Left lung (tissue), 14 donors: ENCODE measurements at regions of chr9 and their contacts with region 1.

Region 1: GRCh38 chr9:129177791-129178559 is at the start of gene IER5L:
- DNase-seq: peak; percentile 94 to 97 (median 96)
- ATAC-seq: peak; percentile 73
- H3K4me3 ChIP-seq: peak within 1 kb of the TSS; percentile 87 to 93
- H3K27ac ChIP-seq: peak within 1 kb of the TSS; percentile 93 to 100
- H3K4me1 ChIP-seq: peaks cover 6 to 40% of the 10 kb centered on the region in 2 donors
- H3K27me3 ChIP-seq: peaks cover 0 to 19% of the 10 kb centered on the region in 2 donors
- CTCF ChIP-seq: no peak
- polyA plus RNA-seq, gene IER5L: 5.7 to 9.6 (median 7.2) TPM

Region 2: GRCh38 chr9:128969491-128969890 is 208.5 kb before region 1 on chr9:
- intact Hi-C with region 1: no loop called
- DNase-seq: no peak
- ATAC-seq: no peak
- H3K4me3 ChIP-seq: no peak overlapping the region
- H3K27ac ChIP-seq: no peak overlapping the region
- H3K4me1 ChIP-seq: no peaks in the 10 kb centered on the region
- H3K27me3 ChIP-seq: no peaks in the 10 kb centered on the region
- CTCF ChIP-seq: no peak

Region 3: GRCh38 chr9:129482521-129483414 is 304.8 kb after region 1 on chr9:
- intact Hi-C with region 1: loop called in 1 of 2 experiments (anchors 5 kb)
- DNase-seq: peak; percentile 86 to 93 (median 89)
- ATAC-seq: peak; percentile 79
- H3K4me3 ChIP-seq: peak overlapping the region; percentile 39 to 40
- H3K27ac ChIP-seq: peak overlapping the region; percentile 94 to 100
- H3K4me1 ChIP-seq: peaks cover 45 to 79% of the 10 kb centered on the region in 2 donors
- H3K27me3 ChIP-seq: no peaks in the 10 kb centered on the region
- CTCF ChIP-seq: no peak

Region 4: GRCh38 chr9:129884220-129885017 is 706.4 kb after region 1 on chr9:
- intact Hi-C with region 1: no loop called
- DNase-seq: peak; percentile 61 to 99 (median 92)
- ATAC-seq: peak; percentile 84
- H3K4me3 ChIP-seq: peak overlapping the region; percentile 14 to 48
- H3K27ac ChIP-seq: peak overlapping the region; percentile 75 to 96
- H3K4me1 ChIP-seq: peaks cover 5 to 57% of the 10 kb centered on the region in 2 donors
- H3K27me3 ChIP-seq: no peaks in the 10 kb centered on the region
- CTCF ChIP-seq: no peak